GM12878 (cell line): ENCODE measurements at regions of chr3 and their contacts with region 1.

Region 1: GRCh38 chr3:105827959-105828358 is 40.9 kb downstream of the CBLB start:
- DNase-seq: no peak
- ATAC-seq: peak; percentile 23
- H3K4me3 ChIP-seq: no peak overlapping the region
- H3K27ac ChIP-seq: peak overlapping the region; percentile 81
- H3K4me1 ChIP-seq: peaks cover 44% of the 10 kb centered on the region
- H3K27me3 ChIP-seq: no peaks in the 10 kb centered on the region
- CTCF ChIP-seq: no peak
- EP300 ChIP-seq: no peak
- POLR2A ChIP-seq: no peak
- RAD21 ChIP-seq: 0 out of 2 replicates have a peak, but pooled peaks have one; percentile 6

Region 2: DNA sequence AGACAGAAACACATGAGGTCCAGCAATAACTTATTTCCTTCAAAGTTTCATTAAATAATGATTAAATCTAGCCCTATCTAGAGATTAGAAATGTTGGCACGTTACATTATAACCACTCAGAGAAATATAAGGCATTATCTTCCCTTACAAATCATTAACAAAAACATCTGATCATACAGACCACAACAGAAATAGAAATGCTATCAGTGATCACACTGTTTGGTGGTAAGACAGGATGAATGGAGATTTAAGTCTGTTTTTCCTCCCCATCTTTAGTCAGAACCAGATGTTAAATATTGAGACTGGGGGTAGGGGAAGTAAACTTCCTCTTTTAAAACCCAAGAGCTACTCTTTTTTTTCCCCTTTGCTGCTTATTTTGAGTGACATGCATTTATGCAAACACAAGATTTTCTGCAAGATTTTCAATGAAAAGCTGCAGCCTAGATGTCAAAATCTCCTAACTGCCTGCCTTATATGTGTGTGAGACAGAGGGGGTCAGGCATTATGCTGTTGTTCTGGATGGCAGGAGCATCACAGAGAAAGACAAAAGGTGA is 29.5 kb before region 1 on chr3:
- CTCF ChIA-PET with region 1: interaction called, 11 read pairs
- POLR2A ChIA-PET with region 1: interaction called, 13 read pairs
- RAD21 ChIA-PET with region 1: interaction called, 50 read pairs
- SMC1A ChIA-PET with region 1: interaction called, 43 read pairs
- in situ Hi-C with region 1: no loop called
- intact Hi-C with region 1: loop called (anchors 2 kb)
- DNase-seq: peak; percentile 51
- ATAC-seq: peak; percentile 73
- H3K4me3 ChIP-seq: no peak overlapping the region
- H3K27ac ChIP-seq: peak overlapping the region; percentile 61
- H3K4me1 ChIP-seq: peaks cover 37% of the 10 kb centered on the region
- H3K27me3 ChIP-seq: no peaks in the 10 kb centered on the region
- CTCF ChIP-seq: no peak
- EP300 ChIP-seq: peak; percentile 64 to 73; a peak in 3 of 4 replicates
- POLR2A ChIP-seq: no peak
- RAD21 ChIP-seq: peak; percentile 16; the same call in 1 of the 2 replicates

Region 3: GRCh38 chr3:105812194-105812586 is 15.8 kb before region 1 on chr3:
- CTCF ChIA-PET with region 1: interaction called, 7 read pairs
- POLR2A ChIA-PET with region 1: interaction called, 5 read pairs
- RAD21 ChIA-PET with region 1: interaction called, 12 read pairs
- SMC1A ChIA-PET with region 1: interaction called, 154 read pairs
- in situ Hi-C with region 1: no loop called
- intact Hi-C with region 1: no loop called
- DNase-seq: no peak
- ATAC-seq: no peak
- H3K4me3 ChIP-seq: no peak overlapping the region
- H3K27ac ChIP-seq: no peak overlapping the region
- H3K4me1 ChIP-seq: peaks cover 3% of the 10 kb centered on the region; the same call in 1 of the 2 replicates
- H3K27me3 ChIP-seq: no peaks in the 10 kb centered on the region
- CTCF ChIP-seq: no peak
- EP300 ChIP-seq: no peak
- POLR2A ChIP-seq: no peak
- RAD21 ChIP-seq: no peak

Region 4: DNA sequence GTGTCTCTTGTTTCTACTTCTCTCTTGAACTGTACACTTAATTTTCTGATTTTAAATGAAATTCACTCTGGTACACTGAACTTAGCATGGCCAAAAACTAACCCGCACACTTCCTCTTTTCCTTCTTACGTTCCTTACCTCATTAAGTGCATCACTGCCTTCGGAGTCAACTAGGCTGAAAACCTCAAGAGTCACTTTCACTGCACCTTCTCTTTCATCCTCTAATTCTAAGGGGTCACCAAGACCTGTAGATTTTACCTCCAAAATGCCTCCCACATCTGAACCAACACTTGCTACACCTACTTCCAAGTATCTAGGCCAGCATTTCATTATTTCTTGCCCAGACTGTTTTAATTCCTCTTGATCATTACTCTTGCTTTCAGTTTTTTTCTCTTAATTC is 34.3 kb after region 1 on chr3:
- CTCF ChIA-PET with region 1: no interaction called
- POLR2A ChIA-PET with region 1: interaction called, 4 read pairs
- RAD21 ChIA-PET with region 1: interaction called, 14 read pairs
- SMC1A ChIA-PET with region 1: interaction called, 14 read pairs
- in situ Hi-C with region 1: no loop called
- intact Hi-C with region 1: loop called (anchors 5 kb)
- DNase-seq: peak; percentile 69
- ATAC-seq: peak; percentile 80
- H3K4me3 ChIP-seq: peak overlapping the region; percentile 39
- H3K27ac ChIP-seq: peak overlapping the region; percentile 55
- H3K4me1 ChIP-seq: peaks cover 17% of the 10 kb centered on the region
- H3K27me3 ChIP-seq: no peaks in the 10 kb centered on the region
- CTCF ChIP-seq: no peak
- EP300 ChIP-seq: peak; percentile 79 to 90
- POLR2A ChIP-seq: no peak
- RAD21 ChIP-seq: peak; percentile 32; the same call in 1 of the 2 replicates

Region 5: DNA sequence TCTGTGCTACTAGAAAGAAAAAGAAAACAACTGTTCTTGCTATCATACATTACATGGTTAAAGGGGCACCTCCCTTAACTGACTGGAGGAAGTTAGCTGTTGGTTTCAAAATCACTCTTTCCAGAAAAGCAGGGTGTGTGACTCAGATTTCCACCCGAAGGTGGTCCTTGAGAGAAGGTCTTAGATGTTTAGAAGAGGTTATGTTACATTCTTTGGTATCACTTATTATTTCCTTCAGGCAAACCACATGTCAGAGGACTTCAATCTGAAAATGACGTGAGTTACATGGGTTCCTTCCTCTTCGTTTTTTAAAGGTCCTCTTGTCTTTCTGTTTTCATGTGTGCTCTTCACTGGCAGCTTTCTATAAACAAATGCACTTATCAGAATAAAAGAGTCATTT is 348.8 kb after region 1 on chr3:
- CTCF ChIA-PET with region 1: interaction called, 3 read pairs
- POLR2A ChIA-PET with region 1: no interaction called
- RAD21 ChIA-PET with region 1: interaction called, 12 read pairs
- SMC1A ChIA-PET with region 1: interaction called, 6 read pairs
- in situ Hi-C with region 1: no loop called
- intact Hi-C with region 1: no loop called
- DNase-seq: peak; percentile 88
- ATAC-seq: peak; percentile 91
- H3K4me3 ChIP-seq: 0 out of 2 replicates have a peak overlapping the region, but pooled peaks have one; percentile 11
- H3K27ac ChIP-seq: peak overlapping the region; percentile 75
- H3K4me1 ChIP-seq: peaks cover 39% of the 10 kb centered on the region
- H3K27me3 ChIP-seq: no peaks in the 10 kb centered on the region
- CTCF ChIP-seq: no peak
- EP300 ChIP-seq: peak; percentile 5 to 67; a peak in 1 of 4 replicates
- POLR2A ChIP-seq: no peak
- RAD21 ChIP-seq: peak; percentile 37; the same call in 1 of the 2 replicates